CD14-positive monocyte (primary cell): ENCODE measurements at regions of chr1 and their contacts with region 1.

Region 1: GRCh38 chr1:32964461-32965250 is at the start of gene RNF19B:
- DNase-seq: peak; percentile 94 to 96 (median 96)
- H3K4me3 ChIP-seq: peak within 1 kb of the TSS; percentile 78 to 97 (median 86)
- H3K4me3 Mint-ChIP-seq: peak within 1 kb of the TSS; percentile 93 to 96
- H3K27ac ChIP-seq: peak within 1 kb of the TSS; percentile 46 to 78
- H3K27ac Mint-ChIP-seq: peak within 1 kb of the TSS; percentile 84 to 98 (median 91)
- H3K4me1 ChIP-seq: peaks cover 30 to 52% of the 10 kb centered on the region in 2 donors
- H3K4me1 Mint-ChIP-seq: peaks cover 44% of the 10 kb centered on the region
- H3K27me3 ChIP-seq: no peaks in the 10 kb centered on the region
- H3K27me3 Mint-ChIP-seq: peaks cover 0 to 3% (median 0%) of the 10 kb centered on the region in 3 donors
- CTCF ChIP-seq: no peak
- polyA plus RNA-seq, gene RNF19B: 4.1 to 106 (median 5.8) TPM

Region 2: DNA sequence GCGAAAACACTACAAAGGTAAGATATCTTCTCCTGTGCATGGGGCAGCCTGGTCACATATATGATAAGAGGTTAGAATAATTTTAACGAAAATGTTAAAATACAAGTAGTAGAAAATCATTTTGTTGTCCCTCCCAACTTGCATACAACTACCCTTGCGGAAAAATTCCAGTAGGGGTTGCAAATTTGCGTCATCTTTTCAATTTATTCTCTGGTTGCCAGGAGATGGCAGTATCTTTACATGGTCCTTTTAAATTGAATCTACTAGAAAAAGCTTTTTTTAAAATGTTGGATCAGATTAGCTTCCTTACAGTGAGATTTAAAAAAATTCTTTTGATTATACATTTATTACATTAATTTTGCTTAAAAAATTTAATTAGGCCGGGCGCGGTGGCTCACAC is 136.3 kb before region 1 on chr1:
- intact Hi-C with region 1: no loop called
- DNase-seq: no peak
- H3K4me3 ChIP-seq: no peak overlapping the region
- H3K4me3 Mint-ChIP-seq: no peak overlapping the region
- H3K27ac ChIP-seq: no peak overlapping the region
- H3K27ac Mint-ChIP-seq: no peak overlapping the region
- H3K4me1 ChIP-seq: peaks cover 0 to 2% of the 10 kb centered on the region in 2 donors
- H3K4me1 Mint-ChIP-seq: peaks cover 7% of the 10 kb centered on the region
- H3K27me3 ChIP-seq: no peaks in the 10 kb centered on the region
- H3K27me3 Mint-ChIP-seq: no peaks in the 10 kb centered on the region
- CTCF ChIP-seq: no peak

Region 3: GRCh38 chr1:32861904-32862695 is 102.6 kb before region 1 on chr1:
- intact Hi-C with region 1: no loop called
- DNase-seq: no peak
- H3K4me3 ChIP-seq: no peak overlapping the region
- H3K4me3 Mint-ChIP-seq: no peak overlapping the region
- H3K27ac ChIP-seq: no peak overlapping the region
- H3K27ac Mint-ChIP-seq: peak overlapping the region in 1 of 7 donors; percentile 22
- H3K4me1 ChIP-seq: no peaks in the 10 kb centered on the region
- H3K4me1 Mint-ChIP-seq: no peaks in the 10 kb centered on the region
- H3K27me3 ChIP-seq: no peaks in the 10 kb centered on the region
- H3K27me3 Mint-ChIP-seq: peaks cover 0 to 2% (median 0%) of the 10 kb centered on the region in 3 donors
- CTCF ChIP-seq: no peak

Region 4: GRCh38 chr1:32981003-32981901 is 16.6 kb after region 1 on chr1:
- intact Hi-C with region 1: loop called in 1 of 2 experiments (anchors 2 kb)
- DNase-seq: peak; percentile 94 to 98 (median 97)
- H3K4me3 ChIP-seq: peak overlapping the region in 1 of 3 experiments; percentile 53
- H3K4me3 Mint-ChIP-seq: peak overlapping the region; percentile 20 to 78
- H3K27ac ChIP-seq: peak overlapping the region; percentile 89 to 92
- H3K27ac Mint-ChIP-seq: peak overlapping the region; percentile 95 to 99 (median 97)
- H3K4me1 ChIP-seq: peaks cover 87 to 94% of the 10 kb centered on the region in 2 donors
- H3K4me1 Mint-ChIP-seq: peaks cover 83% of the 10 kb centered on the region
- H3K27me3 ChIP-seq: no peaks in the 10 kb centered on the region
- H3K27me3 Mint-ChIP-seq: peaks cover 0 to 1% (median 0%) of the 10 kb centered on the region in 3 donors
- CTCF ChIP-seq: no peak

Region 5: GRCh38 chr1:32992489-32993323 is 28.1 kb after region 1 on chr1:
- intact Hi-C with region 1: loop called in 1 of 2 experiments (anchors 2 kb)
- DNase-seq: peak; percentile 96 to 99 (median 97)
- H3K4me3 ChIP-seq: peak overlapping the region in 1 of 3 experiments; percentile 48
- H3K4me3 Mint-ChIP-seq: peak overlapping the region; percentile 53 to 77
- H3K27ac ChIP-seq: peak overlapping the region; percentile 97 to 100
- H3K27ac Mint-ChIP-seq: peak overlapping the region; percentile 99 to 100 (median 100)
- H3K4me1 ChIP-seq: peaks cover 97 to 100% of the 10 kb centered on the region in 2 donors
- H3K4me1 Mint-ChIP-seq: peaks cover 95% of the 10 kb centered on the region
- H3K27me3 ChIP-seq: no peaks in the 10 kb centered on the region
- H3K27me3 Mint-ChIP-seq: peaks cover 0 to 9% (median 2%) of the 10 kb centered on the region in 3 donors
- CTCF ChIP-seq: no peak

Region 6: GRCh38 chr1:33007190-33008050 is 42.8 kb after region 1 on chr1:
- intact Hi-C with region 1: loop called (anchors 5 kb)
- DNase-seq: peak; percentile 67 to 85 (median 80)
- H3K4me3 ChIP-seq: no peak overlapping the region
- H3K4me3 Mint-ChIP-seq: no peak overlapping the region
- H3K27ac ChIP-seq: peak overlapping the region in 1 of 2 donors; percentile 6
- H3K27ac Mint-ChIP-seq: peak overlapping the region in 6 of 7 donors; percentile 38 to 85 (median 66)
- H3K4me1 ChIP-seq: peaks cover 0 to 5% of the 10 kb centered on the region in 2 donors
- H3K4me1 Mint-ChIP-seq: peaks cover 24% of the 10 kb centered on the region
- H3K27me3 ChIP-seq: no peaks in the 10 kb centered on the region
- H3K27me3 Mint-ChIP-seq: no peaks in the 10 kb centered on the region
- CTCF ChIP-seq: peak; percentile 58

Region 7: GRCh38 chr1:33036526-33037503 is 72.2 kb after region 1 on chr1 and contains the start of gene AK2:
- intact Hi-C with region 1: loop called in 1 of 2 experiments (anchors 5 kb)
- DNase-seq: peak; percentile 95 to 97 (median 96)
- H3K4me3 ChIP-seq: peak within 1 kb of the TSS; percentile 47 to 76 (median 72)
- H3K4me3 Mint-ChIP-seq: peak within 1 kb of the TSS; percentile 93 to 96
- H3K27ac ChIP-seq: peak within 1 kb of the TSS; percentile 84 to 91
- H3K27ac Mint-ChIP-seq: peak within 1 kb of the TSS; percentile 93 to 96 (median 95)
- H3K4me1 ChIP-seq: peaks cover 71 to 78% of the 10 kb centered on the region in 2 donors
- H3K4me1 Mint-ChIP-seq: peaks cover 75% of the 10 kb centered on the region
- H3K27me3 ChIP-seq: no peaks in the 10 kb centered on the region
- H3K27me3 Mint-ChIP-seq: peaks cover 0 to 2% (median 0%) of the 10 kb centered on the region in 3 donors
- CTCF ChIP-seq: no peak
- polyA plus RNA-seq, gene AK2: 68.8 to 180 (median 162) TPM

Region 8: DNA sequence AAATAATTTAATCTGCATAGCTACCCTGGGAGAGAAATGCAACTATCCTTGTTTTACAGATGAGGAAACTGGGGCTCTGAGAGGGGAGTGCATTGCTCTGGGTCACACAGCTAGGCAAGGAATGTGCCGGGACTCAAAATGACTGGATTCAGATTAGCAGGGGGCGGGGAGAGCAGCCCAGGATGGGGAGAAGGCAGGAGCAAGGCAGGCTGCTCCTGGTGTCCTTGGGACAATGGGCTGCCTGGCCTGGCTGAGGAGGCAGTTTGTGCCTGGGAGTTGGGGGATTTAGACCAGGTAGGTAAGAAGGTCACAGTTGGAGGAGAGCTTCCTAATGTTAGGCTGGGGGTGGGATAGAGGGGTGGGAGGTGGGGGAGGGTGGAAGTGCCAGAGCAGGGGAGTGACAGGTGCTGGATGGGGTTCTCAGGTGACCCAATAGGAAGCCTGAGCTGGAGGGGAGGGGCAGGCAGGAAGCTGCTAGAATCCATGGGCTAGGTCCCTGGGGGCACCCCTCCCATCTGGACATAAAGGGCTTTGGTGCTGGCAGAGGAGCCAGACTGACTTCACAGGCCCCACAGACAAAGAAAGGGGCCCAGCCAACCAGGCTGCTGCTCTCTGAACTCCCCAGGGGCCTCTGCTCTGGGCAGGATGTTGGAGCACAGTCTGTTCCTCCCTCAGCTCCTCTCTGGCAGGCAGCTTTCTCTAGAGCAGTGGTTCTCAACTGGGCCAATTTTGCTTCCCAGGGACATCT is 188.2 kb after region 1 on chr1:
- intact Hi-C with region 1: no loop called
- DNase-seq: no peak
- H3K4me3 ChIP-seq: no peak overlapping the region
- H3K4me3 Mint-ChIP-seq: no peak overlapping the region
- H3K27ac ChIP-seq: no peak overlapping the region
- H3K27ac Mint-ChIP-seq: no peak overlapping the region
- H3K4me1 ChIP-seq: no peaks in the 10 kb centered on the region
- H3K4me1 Mint-ChIP-seq: peaks cover 2% of the 10 kb centered on the region
- H3K27me3 ChIP-seq: no peaks in the 10 kb centered on the region
- H3K27me3 Mint-ChIP-seq: peaks cover 0 to 4% (median 0%) of the 10 kb centered on the region in 3 donors
- CTCF ChIP-seq: no peak